BJ (cell line): ENCODE measurements at regions of chr11 and their contacts with region 1.

Region 1: GRCh38 chr11:3807909-3808860 is at the start of gene PGAP2:
- DNase-seq: no peak
- H3K4me3 ChIP-seq: peak within 1 kb of the TSS; percentile 80
- H3K27me3 ChIP-seq: no peaks in the 10 kb centered on the region
- CTCF ChIP-seq: peak; percentile 88
- polyA plus RNA-seq, gene PGAP2: 22.3 and 34.9 TPM in 2 replicates

Region 2: DNA sequence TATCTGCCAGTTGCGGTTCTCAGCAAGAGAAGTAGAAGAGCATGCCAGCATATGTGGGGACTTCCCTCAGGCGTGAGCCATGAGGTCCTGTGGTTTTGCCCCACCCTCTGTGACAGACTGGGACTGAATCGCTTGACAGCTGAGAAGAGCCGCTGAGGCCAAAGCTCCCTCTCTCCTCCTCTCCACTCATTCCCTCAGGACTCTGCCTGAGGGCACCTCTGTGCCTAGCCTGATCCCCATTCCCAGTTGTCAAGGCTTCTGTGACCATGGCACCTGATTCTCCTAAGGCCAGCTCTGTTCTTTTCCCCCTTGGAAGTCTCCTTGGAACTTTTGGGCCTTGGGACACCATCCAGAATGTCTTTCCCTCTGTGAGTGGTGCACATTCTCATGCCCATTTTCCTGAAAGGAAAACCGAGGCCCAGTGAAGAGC is 193.4 kb before region 1 on chr11:
- CTCF ChIA-PET with region 1: interaction called, 24 read pairs
- POLR2A ChIA-PET with region 1: no interaction called
- DNase-seq: no peak
- H3K4me3 ChIP-seq: no peak overlapping the region
- H3K27me3 ChIP-seq: no peaks in the 10 kb centered on the region
- CTCF ChIP-seq: no peak

Region 3: DNA sequence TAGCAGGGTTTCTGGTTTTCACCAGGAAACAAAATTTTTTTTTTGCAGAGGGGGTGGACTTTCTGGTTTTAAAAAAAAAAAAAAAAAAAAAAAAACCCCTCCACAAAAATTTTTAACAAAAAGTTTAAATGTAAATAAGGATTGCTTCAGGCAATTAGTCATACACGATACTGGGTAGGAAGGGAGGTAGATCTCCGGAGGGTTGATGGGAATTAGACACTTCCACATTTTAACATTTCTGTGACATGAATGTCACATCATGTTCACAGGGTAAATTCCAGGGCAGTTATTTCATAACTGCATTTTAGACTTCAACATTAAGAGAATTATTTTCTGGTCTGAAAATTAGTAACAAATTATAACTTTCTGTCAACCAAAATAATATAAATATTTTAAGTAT is 26.8 kb before region 1 on chr11:
- CTCF ChIA-PET with region 1: interaction called, 10 read pairs
- POLR2A ChIA-PET with region 1: no interaction called
- DNase-seq: no peak
- H3K4me3 ChIP-seq: no peak overlapping the region
- H3K27me3 ChIP-seq: no peaks in the 10 kb centered on the region
- CTCF ChIP-seq: no peak

Region 4: GRCh38 chr11:3797329-3798095 is 10.7 kb before region 1 on chr11 and contains the start of gene NUP98:
- CTCF ChIA-PET with region 1: interaction called, 14 read pairs
- POLR2A ChIA-PET with region 1: no interaction called
- DNase-seq: peak; percentile 100
- H3K4me3 ChIP-seq: peak within 1 kb of the TSS; percentile 56
- H3K27me3 ChIP-seq: no peaks in the 10 kb centered on the region
- CTCF ChIP-seq: no peak
- polyA plus RNA-seq, gene NUP98: 103 and 145 TPM in 2 replicates

Region 5: DNA sequence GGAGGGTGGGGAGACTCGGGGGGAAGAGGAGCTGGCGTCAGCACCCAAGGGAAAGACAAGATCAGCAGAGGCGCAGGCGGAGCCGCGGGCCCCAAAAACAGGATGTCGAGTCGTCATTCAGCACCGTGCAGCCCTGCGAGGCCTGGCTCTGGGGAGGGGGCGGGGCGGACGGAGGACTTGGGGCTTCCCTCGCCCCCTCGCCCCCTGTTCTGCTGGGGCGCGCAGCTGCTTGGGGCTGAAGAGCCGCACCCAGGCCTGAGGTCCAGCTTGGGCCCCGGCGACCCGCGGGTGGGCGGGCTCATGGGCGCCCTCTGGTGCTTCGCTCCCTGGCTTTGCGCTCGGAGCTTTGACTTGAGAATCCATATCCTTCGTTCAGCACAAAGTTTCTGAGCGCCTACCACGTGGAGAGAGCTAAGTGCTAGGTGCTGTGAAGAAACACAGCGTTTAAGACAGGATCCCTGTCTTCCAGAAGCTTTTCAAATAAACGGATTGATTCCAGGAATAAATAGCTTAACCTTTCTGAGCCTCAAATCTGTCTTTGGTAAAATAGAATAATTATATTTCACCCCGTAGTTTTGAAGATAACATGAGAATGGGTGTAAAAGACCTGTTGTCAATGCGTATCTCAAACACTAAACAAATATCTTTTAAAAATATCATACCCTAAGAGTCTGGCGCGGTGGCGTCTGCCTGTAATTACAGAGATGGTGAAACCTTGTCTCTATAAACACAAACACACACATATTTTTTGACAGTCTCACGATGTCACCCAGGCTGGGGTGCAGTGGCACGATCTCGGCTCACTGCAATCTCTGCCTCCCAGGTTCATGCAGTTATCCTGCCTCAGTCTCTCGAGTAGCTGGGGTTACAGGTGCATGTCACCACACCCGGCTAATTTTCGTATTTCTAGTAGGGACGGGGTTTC is 33.5 kb after region 1 on chr11:
- CTCF ChIA-PET with region 1: interaction called, 20 read pairs
- POLR2A ChIA-PET with region 1: no interaction called
- DNase-seq: peak; percentile 34
- H3K4me3 ChIP-seq: peak overlapping the region; percentile 80
- H3K27me3 ChIP-seq: no peaks in the 10 kb centered on the region
- CTCF ChIP-seq: peak; percentile 94